Activated T-helper 1 cell treated with anti-CD3 and anti-CD28 coated beads, Interleukin-12 subunit alpha, Interleukin-12 subunit beta, Interleukin-2, Interleukin-4 antibody, amounts not matched to agents 30 ng/mL and 10 ng/mL and 1 ng/mL, durations not matched to agents 14 hours and 24 hours and 36 hours (primary cell): ENCODE measurements at regions of chr4 and their contacts with region 1.

Region 1: DNA sequence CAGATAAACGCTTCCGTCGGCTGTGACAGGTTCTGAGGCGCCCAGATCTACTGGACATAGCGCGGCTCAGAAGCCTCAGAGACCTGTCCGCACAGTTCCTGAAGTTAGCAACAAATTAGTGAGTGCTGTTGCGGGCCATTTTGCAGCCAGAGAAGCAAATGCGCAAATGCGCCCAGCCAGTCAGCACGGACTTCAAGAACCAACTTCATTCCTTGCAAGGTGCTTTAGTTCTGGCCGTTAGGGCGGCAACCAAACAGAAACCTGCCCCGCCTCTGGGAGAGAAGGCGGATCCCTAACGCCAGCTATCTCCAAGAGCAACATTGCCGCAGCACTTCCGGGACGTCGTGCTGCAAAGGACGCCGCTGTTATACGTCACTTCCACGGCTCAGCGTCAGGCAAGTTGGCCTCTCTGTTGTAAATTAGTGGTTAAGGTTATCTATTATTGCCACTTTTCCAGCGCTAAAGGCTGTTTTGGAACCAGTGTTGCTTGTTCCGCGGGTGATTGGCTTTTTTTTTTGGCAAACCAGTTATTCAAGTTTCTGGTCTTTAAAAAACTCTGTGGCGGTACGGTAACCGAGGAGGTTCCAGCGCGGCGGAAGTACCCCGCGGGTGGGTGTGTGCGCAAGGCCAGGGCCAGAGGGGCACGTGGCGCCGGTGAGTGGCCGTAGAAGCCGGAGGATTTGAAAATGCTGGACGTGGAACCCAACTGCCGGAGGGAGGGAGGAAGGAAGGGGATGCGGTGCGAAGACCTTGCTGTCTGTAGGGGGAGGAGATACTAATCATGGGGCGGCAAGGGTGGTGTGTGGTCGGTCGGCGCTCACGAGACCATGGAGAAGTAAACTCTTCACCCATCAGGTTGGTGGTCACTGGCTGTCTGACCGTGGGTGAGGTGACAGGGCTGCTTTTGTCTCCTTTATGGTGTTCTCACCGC is at the start of gene GAR1:
- DNase-seq: peak; percentile 88
- H3K4me3 Mint-ChIP-seq: peak within 1 kb of the TSS; percentile 98
- H3K27ac Mint-ChIP-seq: peak within 1 kb of the TSS; percentile 96
- H3K4me1 Mint-ChIP-seq: peaks cover 52% of the 10 kb centered on the region
- H3K27me3 Mint-ChIP-seq: no peaks in the 10 kb centered on the region
- total RNA-seq, gene GAR1: 53.2 and 61.3 TPM in 2 replicates

Region 2: DNA sequence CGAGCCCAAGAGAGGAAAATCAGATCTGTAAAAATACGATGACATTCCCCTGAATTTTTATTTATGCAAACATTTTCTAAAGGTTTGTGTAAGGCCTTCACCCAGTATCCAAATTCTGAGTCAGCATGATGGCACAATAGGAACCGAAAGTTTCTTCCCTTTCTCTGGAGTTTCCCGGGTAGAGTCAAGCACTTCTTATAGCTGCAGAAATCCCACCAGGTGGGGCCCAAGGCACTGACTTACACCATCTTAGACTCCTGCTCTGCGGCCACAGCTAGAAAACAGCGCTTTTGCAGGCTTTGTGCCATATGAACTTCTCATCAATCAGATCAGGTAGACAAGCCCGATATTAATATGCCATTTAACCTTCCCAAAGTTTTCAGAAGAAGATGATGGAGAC is 1660.0 kb before region 1 on chr4:
- intact Hi-C with region 1: loop called (anchors 10 kb)
- DNase-seq: no peak
- H3K4me3 Mint-ChIP-seq: peak overlapping the region; percentile 72
- H3K27ac Mint-ChIP-seq: peak overlapping the region; percentile 59
- H3K4me1 Mint-ChIP-seq: peaks cover 84% of the 10 kb centered on the region
- H3K27me3 Mint-ChIP-seq: no peaks in the 10 kb centered on the region

Region 3: DNA sequence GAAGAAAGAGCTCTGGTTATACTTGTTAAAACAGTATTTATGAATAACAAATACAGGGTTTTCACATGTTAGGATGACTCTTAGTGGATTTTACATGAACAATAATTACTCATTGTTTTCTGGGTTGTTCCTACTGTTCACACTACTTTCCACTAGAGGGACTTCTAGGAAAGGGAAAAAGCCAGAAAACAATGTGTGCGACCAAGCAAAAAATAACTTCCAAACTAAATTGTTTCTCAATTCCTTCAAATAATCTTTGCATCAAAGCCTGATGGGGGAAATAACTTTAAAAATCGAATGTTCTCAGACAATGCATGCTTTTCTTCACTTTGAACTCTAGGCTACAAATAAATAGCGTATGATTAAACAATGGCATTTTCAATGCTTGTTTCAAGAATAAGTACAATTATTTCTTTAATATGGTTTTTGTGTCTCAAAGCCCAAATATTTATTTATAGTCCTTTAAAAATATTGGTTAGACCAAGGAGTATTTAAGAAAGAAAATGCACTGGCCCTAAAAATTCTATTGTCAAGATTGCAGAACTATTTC is 980.5 kb before region 1 on chr4:
- intact Hi-C with region 1: loop called (anchors 10 kb)
- DNase-seq: no peak
- H3K4me3 Mint-ChIP-seq: no peak overlapping the region
- H3K27ac Mint-ChIP-seq: no peak overlapping the region
- H3K4me1 Mint-ChIP-seq: peaks cover 8% of the 10 kb centered on the region
- H3K27me3 Mint-ChIP-seq: peaks cover 5% of the 10 kb centered on the region

Region 4: DNA sequence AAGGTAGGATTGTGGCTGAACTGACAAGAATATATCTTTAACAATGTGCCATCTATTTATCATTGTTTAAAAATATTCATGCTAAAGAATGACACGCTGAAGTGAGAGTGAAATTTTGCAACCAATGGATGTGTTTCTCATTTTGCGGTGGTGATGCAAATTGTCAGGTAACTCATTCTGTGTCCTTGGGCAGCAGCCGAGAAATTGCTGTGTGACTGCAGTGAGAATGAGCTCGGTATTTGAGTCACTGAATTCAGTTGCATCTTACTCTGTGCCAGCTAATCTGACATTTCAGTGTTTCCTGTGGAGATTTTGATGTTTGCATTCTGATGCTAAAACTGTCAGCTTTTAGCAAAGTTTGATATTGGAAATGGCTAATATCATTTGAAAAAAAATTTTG is 227.2 kb before region 1 on chr4:
- intact Hi-C with region 1: loop called (anchors 1 kb)
- DNase-seq: peak; percentile 22
- H3K4me3 Mint-ChIP-seq: no peak overlapping the region
- H3K27ac Mint-ChIP-seq: peak overlapping the region; percentile 1
- H3K4me1 Mint-ChIP-seq: peaks cover 57% of the 10 kb centered on the region
- H3K27me3 Mint-ChIP-seq: no peaks in the 10 kb centered on the region

Region 5: DNA sequence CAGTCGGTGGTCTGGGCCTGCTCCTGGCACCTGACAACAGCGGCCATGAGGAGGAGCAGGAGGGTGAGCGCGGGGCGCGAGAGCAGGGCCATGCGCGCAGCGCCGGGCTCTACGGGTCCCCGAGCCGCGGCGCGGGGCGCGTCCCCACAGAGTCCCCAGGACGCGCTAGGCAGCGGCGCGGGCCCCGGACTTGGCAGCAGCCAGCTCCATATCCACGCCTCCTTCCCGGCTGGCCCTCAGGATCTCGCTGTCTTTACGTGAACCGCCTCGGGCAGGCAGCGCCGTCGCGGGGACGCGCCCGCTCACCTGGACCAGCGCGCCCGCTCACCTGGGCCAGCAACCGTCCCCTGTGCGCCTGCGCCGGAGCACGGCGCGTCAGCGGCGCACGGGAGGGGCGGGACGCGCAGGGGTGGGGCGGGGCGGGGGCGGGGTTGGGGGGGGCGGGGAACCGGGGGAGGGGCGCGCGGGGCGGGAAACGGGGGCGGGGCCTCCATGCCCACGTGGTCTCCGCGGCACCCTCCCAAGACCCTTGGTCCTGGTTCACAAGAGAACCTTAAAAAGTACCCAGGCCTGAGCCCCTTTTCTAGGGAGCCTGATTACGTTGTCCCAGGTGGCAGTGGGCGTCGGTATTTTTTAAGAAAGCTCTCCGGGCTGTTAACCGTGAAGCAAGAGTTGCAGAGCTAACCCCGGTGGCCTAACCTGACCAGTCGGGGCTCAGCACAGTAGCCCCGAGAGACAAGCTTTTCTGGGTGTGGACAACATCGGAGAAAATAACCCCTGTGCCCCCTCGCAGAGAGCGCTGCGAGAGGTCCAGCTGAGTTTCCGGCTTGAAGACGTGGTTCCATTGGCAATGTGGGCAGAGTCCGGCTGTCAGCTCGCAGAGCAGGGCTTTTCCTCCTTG is 85.4 kb before region 1 on chr4 and contains the start of gene PLA2G12A:
- intact Hi-C with region 1: loop called (anchors 1 kb)
- DNase-seq: peak; percentile 68
- H3K4me3 Mint-ChIP-seq: peak within 1 kb of the TSS; percentile 84
- H3K27ac Mint-ChIP-seq: peak within 1 kb of the TSS; percentile 62
- H3K4me1 Mint-ChIP-seq: peaks cover 19% of the 10 kb centered on the region
- H3K27me3 Mint-ChIP-seq: peaks cover 2% of the 10 kb centered on the region
- total RNA-seq, gene PLA2G12A: 11.3 and 13.1 TPM in 2 replicates

Region 6: DNA sequence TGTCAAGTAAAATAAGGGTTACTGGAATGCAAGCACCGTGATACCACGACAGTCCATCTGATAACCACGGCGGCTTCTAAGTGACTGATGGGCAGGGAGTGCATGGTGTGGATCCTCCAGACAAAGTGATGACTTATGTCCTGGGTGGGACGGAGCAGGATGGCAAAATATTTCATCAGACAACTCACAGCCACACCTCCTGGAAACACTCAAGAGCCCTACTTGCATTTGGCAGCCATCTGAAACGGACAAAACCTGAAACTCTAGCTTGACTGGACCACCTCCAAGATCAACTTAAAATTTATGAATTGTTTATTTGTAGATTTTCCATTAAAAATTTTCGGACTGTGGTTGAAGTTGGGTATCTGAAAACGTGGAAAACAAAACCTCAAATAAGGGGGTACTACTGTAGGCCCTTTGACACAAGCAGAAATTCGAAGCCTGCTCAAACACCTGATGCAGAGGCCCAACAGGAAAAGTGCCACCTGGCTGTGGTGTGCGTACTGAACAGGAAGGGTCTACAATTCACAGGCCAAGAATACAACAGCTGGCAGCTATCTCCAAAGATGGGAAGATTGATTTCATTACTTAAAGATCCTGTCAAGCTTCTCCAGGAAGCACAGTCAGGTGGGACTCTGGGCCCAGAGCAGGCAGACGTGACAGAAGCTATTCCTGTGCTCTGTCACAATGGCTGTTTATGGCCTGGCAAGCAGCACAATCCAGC is 58.5 kb after region 1 on chr4:
- intact Hi-C with region 1: no loop called
- DNase-seq: no peak
- H3K4me3 Mint-ChIP-seq: no peak overlapping the region
- H3K27ac Mint-ChIP-seq: no peak overlapping the region
- H3K4me1 Mint-ChIP-seq: no peaks in the 10 kb centered on the region
- H3K27me3 Mint-ChIP-seq: peaks cover 3% of the 10 kb centered on the region